HCT116 (cell line): ENCODE measurements at regions of chr17 and their contacts with region 1.

Region 1: DNA sequence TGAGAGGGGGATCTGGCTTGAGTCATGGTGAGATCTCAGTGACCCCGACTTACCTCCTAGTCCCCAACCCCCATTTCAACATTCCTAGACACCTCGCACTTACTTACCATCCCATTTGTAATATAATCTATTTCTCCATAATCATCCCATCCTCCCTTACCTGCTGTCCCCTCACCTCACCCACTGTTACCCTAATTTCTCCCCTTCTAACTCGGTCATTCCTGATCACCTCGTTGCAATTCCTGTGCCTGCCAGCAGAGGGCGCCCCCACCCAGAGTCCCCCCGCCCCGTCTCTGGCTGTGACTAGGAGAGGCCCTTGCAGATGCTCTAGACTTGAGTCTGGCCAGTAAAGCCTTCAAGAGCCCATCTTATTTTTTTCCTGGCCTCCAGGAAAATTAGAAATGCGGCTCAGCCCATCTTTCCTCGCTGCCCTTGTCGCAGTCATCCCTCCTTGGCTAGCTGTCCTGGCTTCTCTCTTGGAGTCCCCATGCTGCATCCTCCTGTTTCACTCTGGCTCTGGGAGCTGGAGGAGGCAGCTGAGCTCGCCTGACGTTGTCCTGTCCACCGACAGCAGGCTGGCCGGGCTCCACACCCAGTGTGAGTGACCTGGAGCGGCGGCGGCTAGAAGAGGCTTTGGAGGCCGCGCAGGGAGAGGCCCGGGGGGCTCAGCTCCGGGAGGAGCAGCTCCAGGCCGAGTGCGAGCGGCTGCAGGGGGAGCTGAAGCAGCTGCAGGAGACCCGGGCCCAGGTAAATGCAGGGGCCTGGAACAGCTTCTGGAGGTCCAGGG is 5.0 kb downstream of the TBKBP1 start:
- DNase-seq: no peak
- ATAC-seq: peak; percentile 68
- H3K4me3 ChIP-seq: no peak overlapping the region
- H3K27ac ChIP-seq: no peak overlapping the region
- H3K4me1 ChIP-seq: peaks cover 5 to 11% of the 10 kb centered on the region in 2 experiments; a peak in 2 of 4 replicates
- H3K27me3 ChIP-seq: no peaks in the 10 kb centered on the region
- CTCF ChIP-seq: peak in 2 of 3 experiments; percentile 98 to 100; a peak in 5 of 6 replicates
- POLR2A ChIP-seq: no peak
- RAD21 ChIP-seq: peak; percentile 72

Region 2: DNA sequence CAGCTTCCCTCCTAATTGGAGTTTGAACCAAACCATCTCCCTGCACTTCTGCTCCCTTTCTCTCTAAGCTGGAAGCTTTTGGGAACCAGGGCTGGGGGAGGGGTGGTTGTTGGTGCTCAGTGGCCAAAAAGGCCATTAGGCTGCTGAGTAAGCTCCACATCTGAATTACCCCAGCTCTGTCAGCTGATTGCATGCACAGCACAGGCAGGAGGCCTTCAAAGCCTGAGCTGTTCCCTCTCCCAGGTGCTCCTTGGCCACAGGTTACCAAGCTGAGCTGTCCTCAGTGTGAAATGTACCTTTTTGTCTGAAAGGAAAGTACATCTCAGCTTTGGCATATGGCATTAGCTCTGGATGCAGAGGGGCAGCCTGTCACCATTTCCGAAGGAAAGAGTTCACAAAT is 11.2 kb before region 1 on chr17:
- CTCF ChIA-PET with region 1: interaction called, 12 read pairs
- POLR2A ChIA-PET with region 1: interaction called, 3 read pairs
- RAD21 ChIA-PET with region 1: no interaction called
- intact Hi-C with region 1: no loop called
- DNase-seq: no peak
- ATAC-seq: peak; percentile 31; the same call in 1 of the 2 replicates
- H3K4me3 ChIP-seq: no peak overlapping the region
- H3K27ac ChIP-seq: 0 out of 2 replicates have a peak overlapping the region, but pooled peaks have one; percentile 4
- H3K4me1 ChIP-seq: peaks cover 12 to 30% of the 10 kb centered on the region in 2 experiments; a peak in 3 of 4 replicates
- H3K27me3 ChIP-seq: no peaks in the 10 kb centered on the region
- CTCF ChIP-seq: no peak
- POLR2A ChIP-seq: no peak
- RAD21 ChIP-seq: no peak

Region 3: DNA sequence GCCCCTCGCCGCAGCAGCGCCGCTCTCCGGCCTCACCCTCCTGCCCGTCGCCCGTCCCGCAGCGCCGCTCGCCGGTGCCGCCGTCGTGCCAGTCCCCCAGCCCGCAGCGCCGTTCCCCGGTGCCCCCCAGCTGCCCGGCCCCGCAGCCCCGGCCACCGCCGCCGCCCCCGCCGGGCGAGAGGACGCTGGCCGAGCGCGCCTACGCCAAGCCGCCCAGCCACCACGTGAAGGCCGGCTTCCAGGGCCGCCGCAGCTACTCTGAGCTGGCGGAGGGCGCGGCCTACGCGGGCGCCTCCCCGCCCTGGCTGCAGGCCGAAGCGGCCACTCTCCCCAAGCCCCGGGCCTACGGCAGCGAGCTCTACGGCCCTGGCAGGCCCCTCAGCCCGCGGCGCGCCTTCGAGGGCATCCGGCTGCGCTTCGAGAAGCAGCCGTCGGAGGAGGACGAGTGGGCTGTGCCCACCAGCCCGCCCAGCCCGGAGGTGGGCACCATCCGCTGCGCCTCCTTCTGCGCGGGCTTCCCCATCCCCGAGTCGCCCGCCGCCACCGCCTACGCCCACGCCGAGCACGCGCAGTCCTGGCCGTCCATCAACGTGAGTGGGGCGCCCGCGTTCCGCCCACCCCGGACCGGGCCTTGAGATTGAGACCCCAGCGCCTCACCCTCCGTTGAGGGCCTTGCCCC is 10.1 kb after region 1 on chr17:
- CTCF ChIA-PET with region 1: interaction called, 13 read pairs
- POLR2A ChIA-PET with region 1: no interaction called
- RAD21 ChIA-PET with region 1: no interaction called
- intact Hi-C with region 1: no loop called
- DNase-seq: no peak
- ATAC-seq: no peak
- H3K4me3 ChIP-seq: no peak overlapping the region
- H3K27ac ChIP-seq: no peak overlapping the region; the same call in 1 of the 2 replicates
- H3K4me1 ChIP-seq: peaks cover 0 to 9% of the 10 kb centered on the region in 2 experiments; a peak in 2 of 4 replicates
- H3K27me3 ChIP-seq: peaks cover 12% of the 10 kb centered on the region; the same call in 1 of the 2 replicates
- CTCF ChIP-seq: no peak
- POLR2A ChIP-seq: no peak
- RAD21 ChIP-seq: no peak